AG04449 (cell line): ENCODE measurements at regions of chr10 and their contacts with region 1.

Region 1: GRCh38 chr10:92644921-92645320 is 44.8 kb upstream of the HHEX start:
- DNase-seq: no peak
- H3K4me3 ChIP-seq: no peak overlapping the region
- CTCF ChIP-seq: no peak

Region 2: GRCh38 chr10:92656291-92656961 is 11.5 kb after region 1 on chr10:
- CTCF ChIA-PET with region 1: interaction called, 11 read pairs
- POLR2A ChIA-PET with region 1: no interaction called
- DNase-seq: no peak
- H3K4me3 ChIP-seq: no peak overlapping the region
- CTCF ChIP-seq: no peak